ENCODE measurements at regions of chr9 and their contacts with region 1.

Region 1: DNA sequence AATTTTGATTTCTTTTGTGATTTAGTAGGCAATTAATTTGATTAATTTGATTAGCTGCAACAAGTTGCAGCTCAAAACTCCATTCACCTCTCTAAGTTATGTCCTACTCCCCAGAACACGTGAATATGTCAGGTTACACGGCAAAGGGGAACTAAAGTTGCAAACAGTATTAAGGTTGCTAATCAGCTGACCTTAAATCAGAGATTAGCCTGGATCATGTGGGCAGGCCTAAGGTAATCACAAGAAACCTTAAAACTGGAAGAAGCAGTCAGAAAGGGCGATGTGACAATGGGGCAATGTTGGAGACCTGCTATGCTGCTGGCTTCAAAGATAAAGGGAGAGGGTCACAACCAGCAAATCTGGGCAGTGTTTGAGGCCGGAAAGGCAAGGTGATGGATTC is 47.3 kb upstream of the ANXA1 start:
- DNase-seq: no peak
- ATAC-seq: no peak
- H3K4me3 Mint-ChIP-seq: no peak overlapping the region
- H3K27ac Mint-ChIP-seq: no peak overlapping the region
- H3K4me1 Mint-ChIP-seq: no peaks in the 10 kb centered on the region
- H3K27me3 Mint-ChIP-seq: peaks cover 1% of the 10 kb centered on the region
- CTCF ChIP-seq: no peak

Region 2: DNA sequence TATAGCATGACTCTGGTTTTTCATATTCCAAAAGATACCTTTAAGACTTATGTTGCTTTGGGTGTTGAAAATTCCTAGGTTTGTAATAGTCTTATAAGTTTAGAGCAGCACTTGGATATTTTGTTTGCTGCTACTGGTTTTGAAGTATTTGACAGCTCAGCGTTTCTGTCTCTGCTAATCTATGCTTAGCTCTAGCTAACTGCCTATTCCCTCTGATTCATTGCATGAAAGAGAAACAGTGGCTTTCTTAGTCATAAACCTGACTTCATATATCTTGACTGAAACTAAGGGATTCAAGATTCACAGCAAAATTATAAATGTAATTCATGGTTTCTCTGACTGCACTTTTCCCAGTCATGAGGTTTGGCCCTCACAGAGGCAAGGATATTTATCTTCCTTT is 11.7 kb after region 1 on chr9:
- CTCF ChIA-PET with region 1: interaction called, 25 read pairs
- POLR2A ChIA-PET with region 1: interaction called, 3 read pairs
- intact Hi-C with region 1: no loop called
- DNase-seq: peak; percentile 24
- ATAC-seq: peak; percentile 95
- H3K4me3 Mint-ChIP-seq: no peak overlapping the region
- H3K27ac Mint-ChIP-seq: peak overlapping the region; percentile 0
- H3K4me1 Mint-ChIP-seq: peaks cover 40% of the 10 kb centered on the region
- H3K27me3 Mint-ChIP-seq: no peaks in the 10 kb centered on the region
- CTCF ChIP-seq: no peak

Region 3: GRCh38 chr9:73149371-73150067 is 45.2 kb after region 1 on chr9:
- CTCF ChIA-PET with region 1: interaction called, 13 read pairs
- POLR2A ChIA-PET with region 1: no interaction called
- intact Hi-C with region 1: no loop called
- DNase-seq: peak; percentile 42
- ATAC-seq: peak; percentile 64
- H3K4me3 Mint-ChIP-seq: peak overlapping the region; percentile 50
- H3K27ac Mint-ChIP-seq: peak overlapping the region; percentile 94
- H3K4me1 Mint-ChIP-seq: peaks cover 71% of the 10 kb centered on the region
- H3K27me3 Mint-ChIP-seq: no peaks in the 10 kb centered on the region
- CTCF ChIP-seq: no peak

Region 4: GRCh38 chr9:73176450-73176875 is 72.1 kb after region 1 on chr9:
- CTCF ChIA-PET with region 1: interaction called, 81 read pairs
- POLR2A ChIA-PET with region 1: no interaction called
- intact Hi-C with region 1: no loop called
- DNase-seq: no peak
- ATAC-seq: no peak
- H3K4me3 Mint-ChIP-seq: no peak overlapping the region
- H3K27ac Mint-ChIP-seq: no peak overlapping the region
- H3K4me1 Mint-ChIP-seq: peaks cover 10% of the 10 kb centered on the region
- H3K27me3 Mint-ChIP-seq: no peaks in the 10 kb centered on the region
- CTCF ChIP-seq: no peak

Region 5: DNA sequence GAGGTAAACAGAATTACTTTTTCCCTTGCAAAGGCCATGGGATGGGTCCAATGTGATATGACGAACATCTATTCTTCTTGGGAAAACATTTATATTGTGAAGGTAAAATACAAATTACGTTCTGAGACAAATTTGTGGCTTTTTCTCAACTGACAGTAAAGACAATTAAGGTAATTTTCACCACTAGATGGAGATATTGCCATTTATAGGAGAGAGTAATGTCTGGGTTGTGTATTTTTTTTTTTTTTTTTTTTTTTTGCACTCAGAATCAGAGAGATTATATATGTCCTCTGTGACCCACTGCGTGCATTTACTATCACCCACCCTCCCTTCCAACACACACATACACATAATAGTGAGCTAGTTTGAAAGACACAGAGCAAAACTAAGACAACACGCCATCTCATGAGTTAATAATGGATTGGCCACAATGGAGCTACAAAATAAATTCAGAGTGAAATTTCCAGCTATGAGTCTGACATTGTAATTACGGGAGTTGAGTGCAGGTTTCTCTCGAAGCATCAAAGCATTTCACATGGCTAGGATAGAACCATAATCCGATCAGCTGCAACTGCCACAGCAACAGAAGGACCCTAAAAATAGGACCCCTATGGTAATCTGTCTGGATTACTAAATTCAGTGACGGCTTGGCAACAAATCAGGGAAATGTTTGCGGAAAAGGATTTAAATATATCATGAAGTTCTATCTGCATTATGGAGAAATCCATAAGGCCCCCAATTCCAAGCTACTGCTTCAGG is 96.5 kb after region 1 on chr9:
- CTCF ChIA-PET with region 1: interaction called, 14 read pairs
- POLR2A ChIA-PET with region 1: no interaction called
- intact Hi-C with region 1: no loop called
- DNase-seq: no peak
- ATAC-seq: no peak
- H3K4me3 Mint-ChIP-seq: no peak overlapping the region
- H3K27ac Mint-ChIP-seq: no peak overlapping the region
- H3K4me1 Mint-ChIP-seq: no peaks in the 10 kb centered on the region
- H3K27me3 Mint-ChIP-seq: peaks cover 8% of the 10 kb centered on the region
- CTCF ChIP-seq: peak; percentile 67

Measured in activated CD8-positive, alpha-beta T cell treated with anti-CD3 and anti-CD28 coated beads for 36 hours (primary cell).